Endothelial cell of umbilical vein (primary cell): ENCODE measurements at regions of chr1 and their contacts with region 1.

Region 1: DNA sequence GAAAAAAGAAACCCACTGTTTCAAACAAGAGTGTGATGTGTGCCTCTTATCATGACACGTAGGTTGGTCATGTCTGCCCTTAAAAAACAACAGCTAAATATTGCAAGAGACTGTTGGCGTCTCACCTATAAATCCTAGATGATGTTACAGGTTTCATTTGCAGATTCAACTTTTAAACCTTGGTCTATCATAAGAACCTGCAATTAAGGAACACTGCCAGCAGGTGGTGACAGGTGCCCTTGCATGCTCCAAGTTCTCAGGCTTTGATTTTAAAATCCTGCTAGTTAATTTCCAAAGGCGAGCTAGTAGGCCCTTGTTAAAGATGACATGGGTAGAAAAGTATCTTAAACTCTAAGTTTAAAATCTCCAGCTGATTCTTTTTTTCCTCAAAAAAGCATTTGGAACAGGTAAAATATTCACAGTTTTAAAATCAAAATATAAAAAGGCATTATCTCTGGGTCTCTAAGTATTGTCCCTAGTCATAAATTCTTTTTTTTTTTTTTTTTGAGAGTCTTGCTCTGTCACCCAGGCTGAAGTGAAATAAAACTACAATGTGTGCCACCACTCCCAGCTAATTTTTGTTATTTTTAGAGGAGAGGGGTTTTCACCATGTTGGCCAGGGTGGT is 39.1 kb downstream of the CLSTN1 start:
- DNase-seq: peak; percentile 60
- H3K4me3 ChIP-seq: no peak overlapping the region
- H3K27ac ChIP-seq: no peak overlapping the region
- H3K4me1 ChIP-seq: peaks cover 4% of the 10 kb centered on the region
- H3K27me3 ChIP-seq: no peaks in the 10 kb centered on the region
- CTCF ChIP-seq: peak; percentile 48 to 57
- POLR2A ChIP-seq: no peak

Region 2: DNA sequence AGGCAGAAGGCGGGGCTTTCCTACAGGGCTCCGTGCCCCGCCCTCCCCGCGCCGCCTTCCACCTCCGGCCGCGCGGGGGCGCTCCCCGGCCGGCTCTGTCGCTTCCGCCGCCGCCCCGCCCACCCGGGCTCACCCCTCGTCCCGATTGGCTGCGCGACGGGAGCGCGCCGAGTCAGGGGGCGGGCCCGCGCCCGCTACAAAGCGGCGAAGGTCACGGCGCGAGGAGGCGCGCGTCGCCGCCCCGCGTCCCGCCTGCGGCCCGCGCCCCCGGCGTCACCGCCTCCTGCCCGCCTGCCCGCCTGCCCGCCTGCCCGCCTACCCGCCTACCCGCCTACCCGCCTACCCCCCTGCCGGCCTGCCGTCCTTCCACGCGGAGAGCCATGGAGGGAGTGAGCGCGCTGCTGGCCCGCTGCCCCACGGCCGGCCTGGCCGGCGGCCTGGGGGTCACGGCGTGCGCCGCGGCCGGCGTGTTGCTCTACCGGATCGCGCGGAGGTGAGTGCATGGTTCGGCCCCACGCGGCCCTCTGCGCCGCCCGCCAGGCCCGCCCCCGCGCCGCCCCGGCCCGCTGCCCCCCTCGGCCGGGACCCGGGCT is 196.0 kb before region 1 on chr1 and contains the start of gene TMEM201:
- CTCF ChIA-PET with region 1: no interaction called
- POLR2A ChIA-PET with region 1: no interaction called
- dilution Hi-C with region 1: no loop called
- intact Hi-C with region 1: no loop called
- DNase-seq: peak; percentile 92
- H3K4me3 ChIP-seq: peak within 1 kb of the TSS; percentile 54 to 75 (median 71)
- H3K27ac ChIP-seq: peak within 1 kb of the TSS; percentile 3
- H3K4me1 ChIP-seq: peaks cover 20% of the 10 kb centered on the region
- H3K27me3 ChIP-seq: no peaks in the 10 kb centered on the region
- CTCF ChIP-seq: peak; percentile 70 to 76
- POLR2A ChIP-seq: no peak
- total RNA-seq, gene TMEM201: 21.0 and 24.8 TPM in 2 replicates

Region 3: GRCh38 chr1:9770298-9770697 is 14.3 kb before region 1 on chr1:
- CTCF ChIA-PET with region 1: interaction called, 10 read pairs
- POLR2A ChIA-PET with region 1: no interaction called
- dilution Hi-C with region 1: no loop called
- intact Hi-C with region 1: no loop called
- DNase-seq: no peak
- H3K4me3 ChIP-seq: no peak overlapping the region
- H3K27ac ChIP-seq: no peak overlapping the region
- H3K4me1 ChIP-seq: no peaks in the 10 kb centered on the region
- H3K27me3 ChIP-seq: no peaks in the 10 kb centered on the region
- CTCF ChIP-seq: no peak
- POLR2A ChIP-seq: no peak

Region 4: DNA sequence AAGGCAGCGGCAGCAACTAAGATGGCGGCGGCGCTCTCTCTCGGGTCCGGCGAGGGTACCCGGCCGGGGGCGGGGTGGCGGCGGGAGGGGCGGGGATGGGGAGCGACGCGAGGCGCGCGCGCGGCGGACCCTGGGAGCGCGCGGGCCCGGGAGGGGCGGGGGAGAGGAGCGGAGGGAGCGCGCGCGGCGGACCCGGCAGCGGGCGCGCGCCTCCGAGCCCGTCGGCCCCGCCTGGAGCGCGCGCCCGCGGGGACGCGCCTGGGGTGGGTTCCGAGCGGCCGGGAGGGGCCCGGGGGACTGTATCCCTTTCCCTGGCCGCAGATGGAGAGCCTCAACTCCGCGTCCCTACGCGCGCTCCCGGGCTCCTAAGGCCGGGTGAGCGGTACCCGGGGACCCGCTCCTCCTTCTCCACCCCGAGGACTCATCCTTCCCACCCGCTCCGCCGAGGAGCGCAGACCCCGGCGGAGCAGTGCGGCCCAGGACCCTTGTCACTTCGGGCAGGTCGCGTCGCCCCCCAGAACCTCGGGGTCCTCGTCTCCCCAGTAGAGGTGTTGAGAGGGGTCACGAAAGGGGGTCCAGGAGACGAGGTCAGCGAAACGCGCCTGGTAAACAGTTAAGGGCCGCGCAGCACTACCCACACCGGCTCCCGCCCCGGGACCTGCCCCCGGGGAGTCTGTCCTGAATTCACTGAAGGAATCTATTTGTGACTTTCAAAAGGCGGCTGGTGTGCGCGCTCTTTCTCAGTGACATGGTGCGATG is 39.5 kb after region 1 on chr1 and contains the start of gene CLSTN1:
- CTCF ChIA-PET with region 1: interaction called, 3 read pairs
- POLR2A ChIA-PET with region 1: no interaction called
- dilution Hi-C with region 1: no loop called
- intact Hi-C with region 1: loop called (anchors 2 kb)
- DNase-seq: peak; percentile 80
- H3K4me3 ChIP-seq: peak within 1 kb of the TSS; percentile 26 to 98 (median 77)
- H3K27ac ChIP-seq: no peak within 1 kb of the TSS
- H3K4me1 ChIP-seq: peaks cover 18% of the 10 kb centered on the region
- H3K27me3 ChIP-seq: no peaks in the 10 kb centered on the region
- CTCF ChIP-seq: no peak
- POLR2A ChIP-seq: no peak
- total RNA-seq, gene CLSTN1: 130 and 132 TPM in 2 replicates

Region 5: GRCh38 chr1:9867408-9868243 is 83.0 kb after region 1 on chr1:
- CTCF ChIA-PET with region 1: interaction called, 82 read pairs
- POLR2A ChIA-PET with region 1: no interaction called
- dilution Hi-C with region 1: no loop called
- intact Hi-C with region 1: loop called (anchors 1 kb)
- DNase-seq: peak; percentile 62
- H3K4me3 ChIP-seq: no peak overlapping the region
- H3K27ac ChIP-seq: no peak overlapping the region
- H3K4me1 ChIP-seq: peaks cover 15% of the 10 kb centered on the region
- H3K27me3 ChIP-seq: no peaks in the 10 kb centered on the region
- CTCF ChIP-seq: peak; percentile 96 to 97
- POLR2A ChIP-seq: no peak

Region 6: GRCh38 chr1:9910425-9911178 is 126.0 kb after region 1 on chr1:
- CTCF ChIA-PET with region 1: interaction called, 13 read pairs
- POLR2A ChIA-PET with region 1: no interaction called
- dilution Hi-C with region 1: no loop called
- intact Hi-C with region 1: no loop called
- DNase-seq: peak; percentile 99
- H3K4me3 ChIP-seq: peak overlapping the region; percentile 35 to 70 (median 37)
- H3K27ac ChIP-seq: peak overlapping the region; percentile 61
- H3K4me1 ChIP-seq: peaks cover 11% of the 10 kb centered on the region
- H3K27me3 ChIP-seq: no peaks in the 10 kb centered on the region
- CTCF ChIP-seq: no peak
- POLR2A ChIP-seq: peak; percentile 44

Region 7: GRCh38 chr1:10283318-10283984 is 498.8 kb after region 1 on chr1:
- CTCF ChIA-PET with region 1: no interaction called
- POLR2A ChIA-PET with region 1: no interaction called
- dilution Hi-C with region 1: no loop called
- intact Hi-C with region 1: no loop called
- DNase-seq: no peak
- H3K4me3 ChIP-seq: no peak overlapping the region
- H3K27ac ChIP-seq: no peak overlapping the region
- H3K4me1 ChIP-seq: no peaks in the 10 kb centered on the region
- H3K27me3 ChIP-seq: no peaks in the 10 kb centered on the region
- CTCF ChIP-seq: no peak
- POLR2A ChIP-seq: no peak